Endothelial cell of umbilical vein (primary cell): ENCODE measurements at regions of chr2 and their contacts with region 1.

Region 1: DNA sequence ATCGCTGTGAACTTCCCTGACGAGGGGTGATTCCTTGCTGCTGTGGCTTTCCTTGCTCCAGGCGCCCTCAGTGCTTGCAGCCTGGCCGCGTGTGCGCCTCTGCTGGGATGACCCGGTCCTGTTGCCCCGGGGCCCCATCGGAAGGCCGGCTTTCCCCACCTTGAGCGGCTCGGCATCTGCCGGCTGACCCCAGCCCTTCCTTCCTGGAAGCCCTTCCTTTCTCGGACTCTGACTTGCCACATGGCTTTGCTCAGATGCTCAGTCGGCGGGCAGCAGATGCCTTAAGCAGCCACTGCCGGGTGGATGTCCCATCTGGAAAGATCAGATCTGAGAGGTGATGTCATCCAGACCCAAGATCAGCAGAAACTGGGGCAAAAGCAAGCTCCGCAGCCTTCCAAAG is 100.5 kb upstream of the ODC1 start:
- DNase-seq: peak; percentile 52
- H3K4me3 ChIP-seq: no peak overlapping the region
- H3K27ac ChIP-seq: no peak overlapping the region
- H3K4me1 ChIP-seq: peaks cover 10% of the 10 kb centered on the region
- H3K27me3 ChIP-seq: no peaks in the 10 kb centered on the region
- CTCF ChIP-seq: peak in 1 of 2 donors; percentile 9
- POLR2A ChIP-seq: no peak

Region 2: DNA sequence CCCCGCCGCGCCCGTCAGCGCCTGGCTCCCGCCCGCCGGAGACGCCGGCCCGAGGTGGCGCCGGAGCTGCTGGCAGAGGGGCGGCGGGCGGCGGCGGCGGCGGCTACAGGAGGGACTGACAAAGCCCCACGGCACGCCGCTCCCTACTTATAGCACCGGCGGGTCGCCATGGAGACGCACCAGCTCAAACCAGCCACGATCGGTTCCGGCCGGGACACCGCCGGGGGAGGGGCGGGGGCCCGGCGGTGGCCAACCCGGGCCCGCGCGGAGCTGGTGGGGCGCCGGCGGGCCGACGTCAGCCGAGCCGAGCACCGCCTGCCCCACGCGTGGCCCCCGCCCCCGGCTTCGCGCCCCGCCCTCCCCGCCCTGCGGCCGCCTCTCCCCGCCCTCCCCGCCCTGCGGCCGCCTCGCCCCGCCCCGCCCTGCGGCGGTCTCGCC is 100.4 kb before region 1 on chr2 and contains the start of gene ODC1:
- CTCF ChIA-PET with region 1: interaction called, 3 read pairs
- POLR2A ChIA-PET with region 1: no interaction called
- dilution Hi-C with region 1: no loop called
- intact Hi-C with region 1: loop called (anchors 2 kb)
- DNase-seq: peak; percentile 83
- H3K4me3 ChIP-seq: peak within 1 kb of the TSS; percentile 71 to 94 (median 88)
- H3K27ac ChIP-seq: peak within 1 kb of the TSS; percentile 88
- H3K4me1 ChIP-seq: peaks cover 28% of the 10 kb centered on the region
- H3K27me3 ChIP-seq: no peaks in the 10 kb centered on the region
- CTCF ChIP-seq: no peak
- POLR2A ChIP-seq: peak; percentile 64
- total RNA-seq, gene ODC1: 104 and 109 TPM in 2 replicates

Region 3: DNA sequence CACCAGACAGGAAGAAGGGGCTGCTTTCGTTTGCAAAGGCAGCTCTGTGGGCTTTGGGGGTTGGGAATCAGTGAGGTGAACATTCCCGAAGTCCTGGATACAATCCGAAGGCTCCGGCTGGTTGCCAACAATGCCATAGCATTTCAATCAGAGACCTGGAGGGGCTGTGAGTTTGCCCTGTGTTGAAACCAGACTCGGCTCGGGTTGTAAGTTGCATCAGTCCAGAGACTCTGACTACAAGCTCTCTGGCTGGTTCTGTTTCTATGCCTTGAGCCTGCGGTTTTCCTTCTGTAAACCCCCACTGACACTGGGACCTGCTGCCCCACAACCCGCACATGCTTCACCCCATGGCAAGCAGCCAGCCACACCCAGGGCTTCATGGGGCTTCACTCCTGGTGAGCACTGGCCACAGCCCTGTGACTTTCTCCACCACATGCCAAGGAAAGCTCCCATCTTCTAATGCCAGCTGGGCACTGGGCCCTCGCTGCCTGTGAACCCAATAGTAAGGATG is 14.8 kb before region 1 on chr2:
- CTCF ChIA-PET with region 1: no interaction called
- POLR2A ChIA-PET with region 1: no interaction called
- dilution Hi-C with region 1: no loop called
- intact Hi-C with region 1: no loop called
- DNase-seq: no peak
- H3K4me3 ChIP-seq: no peak overlapping the region
- H3K27ac ChIP-seq: no peak overlapping the region
- H3K4me1 ChIP-seq: no peaks in the 10 kb centered on the region
- H3K27me3 ChIP-seq: no peaks in the 10 kb centered on the region
- CTCF ChIP-seq: no peak
- POLR2A ChIP-seq: no peak

Region 4: DNA sequence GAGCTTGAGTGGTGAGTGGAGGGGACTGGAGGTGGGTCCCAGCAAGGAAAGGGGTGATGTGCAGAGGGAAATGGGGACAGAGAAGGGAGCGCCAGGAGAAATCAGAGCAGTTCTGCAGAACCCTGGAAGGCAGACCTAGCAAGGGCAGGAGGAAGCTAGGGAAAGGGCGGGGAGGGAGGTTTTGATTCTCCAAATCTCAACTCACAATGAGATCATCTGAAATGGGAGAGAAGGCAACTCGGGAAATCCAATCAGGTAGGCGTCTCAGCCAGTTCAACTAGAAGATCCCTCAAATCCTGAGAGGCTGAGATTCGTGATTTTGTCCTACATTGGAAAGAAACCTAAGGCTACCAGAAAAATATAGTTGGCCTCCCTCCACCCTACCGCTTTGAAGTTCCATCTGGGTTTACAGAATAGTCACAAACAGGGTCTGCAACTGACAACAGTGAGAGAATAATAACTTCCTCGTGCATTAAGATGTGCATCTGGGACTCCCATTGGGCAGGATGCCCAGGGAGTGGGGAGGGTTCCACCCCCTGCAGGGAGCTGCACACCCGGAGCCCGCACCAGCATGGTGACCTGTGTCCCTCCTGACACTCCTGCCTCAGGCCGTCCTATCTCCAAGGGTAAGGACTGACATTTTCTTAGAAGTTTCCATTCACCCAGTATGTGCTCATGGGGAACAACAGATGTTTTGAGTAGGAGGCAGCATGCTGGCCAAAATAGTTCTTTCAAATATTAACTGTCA is 12.8 kb after region 1 on chr2:
- CTCF ChIA-PET with region 1: no interaction called
- POLR2A ChIA-PET with region 1: no interaction called
- dilution Hi-C with region 1: no loop called
- intact Hi-C with region 1: no loop called
- DNase-seq: no peak
- H3K4me3 ChIP-seq: no peak overlapping the region
- H3K27ac ChIP-seq: no peak overlapping the region
- H3K4me1 ChIP-seq: no peaks in the 10 kb centered on the region
- H3K27me3 ChIP-seq: no peaks in the 10 kb centered on the region
- CTCF ChIP-seq: no peak
- POLR2A ChIP-seq: no peak

Region 5: GRCh38 chr2:10575609-10576280 is 27.1 kb after region 1 on chr2:
- CTCF ChIA-PET with region 1: interaction called, 3 read pairs
- POLR2A ChIA-PET with region 1: no interaction called
- dilution Hi-C with region 1: no loop called
- intact Hi-C with region 1: loop called (anchors 2 kb)
- DNase-seq: peak; percentile 82
- H3K4me3 ChIP-seq: no peak overlapping the region
- H3K27ac ChIP-seq: peak overlapping the region; percentile 89
- H3K4me1 ChIP-seq: peaks cover 20% of the 10 kb centered on the region
- H3K27me3 ChIP-seq: no peaks in the 10 kb centered on the region
- CTCF ChIP-seq: no peak
- POLR2A ChIP-seq: no peak